ENCODE measurements at regions of chr18 and their contacts with region 1.

Region 1: DNA sequence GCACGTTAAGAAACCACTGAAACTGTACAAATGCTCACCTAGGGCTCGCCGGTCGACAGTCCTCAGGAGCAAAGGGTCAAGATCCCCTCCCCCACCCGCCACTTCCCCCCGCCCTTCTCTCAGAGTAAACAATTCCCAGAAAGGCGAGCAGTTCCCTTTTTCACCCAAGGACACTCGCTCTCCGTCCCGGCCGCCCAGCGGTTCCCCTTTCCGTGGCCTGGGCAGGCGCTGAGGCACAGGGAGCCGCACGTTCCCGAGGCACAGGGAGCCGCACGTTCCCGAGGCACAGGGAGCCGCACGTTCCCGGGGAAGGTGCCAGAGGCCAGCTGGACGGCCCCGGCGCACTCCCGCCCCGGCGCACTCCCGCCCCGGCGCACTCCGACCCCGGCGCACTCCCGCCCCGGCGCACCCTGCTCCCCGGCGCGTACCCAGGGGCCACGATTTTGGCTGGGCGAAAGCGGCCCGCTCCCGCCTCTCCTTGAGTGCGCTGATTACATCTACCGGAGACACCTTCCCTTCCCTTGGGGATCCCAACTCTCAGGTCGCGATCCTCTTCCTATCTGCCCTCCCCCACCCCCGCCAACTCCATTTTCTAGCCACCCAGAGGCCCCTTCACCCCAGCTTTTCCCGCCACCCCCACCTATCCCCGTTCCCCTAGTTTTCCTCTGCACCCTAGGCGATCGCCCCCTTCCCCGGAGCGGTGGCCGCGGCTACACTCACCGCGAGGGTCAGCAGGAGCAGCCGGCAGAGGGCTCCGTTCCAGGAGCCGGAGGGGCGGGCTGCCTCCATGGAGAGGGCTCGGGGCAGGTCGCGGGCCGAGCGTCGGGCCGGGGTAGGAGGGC is 817 bp downstream of the DSC2 start:
- H3K4me3 Mint-ChIP-seq: peak overlapping the region; percentile 94
- H3K27ac Mint-ChIP-seq: peak overlapping the region; percentile 98
- H3K4me1 Mint-ChIP-seq: peaks cover 45% of the 10 kb centered on the region
- H3K27me3 Mint-ChIP-seq: peaks cover 27% of the 10 kb centered on the region

Region 2: DNA sequence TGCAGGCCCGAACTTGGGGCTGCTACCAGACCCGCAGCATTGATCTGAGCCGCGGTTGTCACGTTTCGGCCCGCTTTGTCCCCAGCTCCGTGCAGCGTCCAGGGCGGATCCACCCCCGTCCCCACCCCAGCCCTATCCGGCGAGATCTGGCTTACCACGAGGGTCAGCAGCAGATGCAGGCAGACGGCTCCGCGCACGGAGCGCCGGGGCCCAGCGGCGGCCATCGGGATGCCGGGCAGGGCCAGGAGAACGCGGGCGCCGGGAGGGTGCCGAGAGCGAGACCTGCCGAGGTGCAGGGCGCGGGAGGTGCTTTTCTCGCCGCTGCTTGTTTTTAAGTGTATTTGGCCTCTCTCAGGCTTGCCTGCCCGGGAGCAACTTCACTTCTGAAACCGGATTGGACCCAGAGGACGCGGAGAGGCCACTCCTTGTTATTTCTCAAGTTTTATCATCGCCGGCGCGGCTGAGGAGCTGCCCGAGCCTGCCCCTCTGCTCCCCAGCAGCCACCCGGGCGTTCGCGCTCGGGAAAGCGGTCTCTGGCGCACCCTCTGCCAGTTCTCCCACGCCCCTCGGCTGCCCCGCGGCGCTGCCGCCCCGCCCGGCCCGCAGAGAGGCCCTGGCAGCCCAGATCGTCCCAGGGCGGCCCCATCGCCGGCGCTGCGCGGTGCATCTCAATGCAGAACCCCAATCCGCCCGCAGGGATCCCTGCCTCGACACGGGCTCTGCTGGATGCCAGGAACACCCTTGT is 58.8 kb before region 1 on chr18 and contains the start of gene DSC3:
- intact Hi-C with region 1: no loop called
- H3K4me3 Mint-ChIP-seq: peak within 1 kb of the TSS; percentile 46
- H3K27ac Mint-ChIP-seq: no peak within 1 kb of the TSS
- H3K4me1 Mint-ChIP-seq: peaks cover 17% of the 10 kb centered on the region
- H3K27me3 Mint-ChIP-seq: peaks cover 72% of the 10 kb centered on the region

Region 3: DNA sequence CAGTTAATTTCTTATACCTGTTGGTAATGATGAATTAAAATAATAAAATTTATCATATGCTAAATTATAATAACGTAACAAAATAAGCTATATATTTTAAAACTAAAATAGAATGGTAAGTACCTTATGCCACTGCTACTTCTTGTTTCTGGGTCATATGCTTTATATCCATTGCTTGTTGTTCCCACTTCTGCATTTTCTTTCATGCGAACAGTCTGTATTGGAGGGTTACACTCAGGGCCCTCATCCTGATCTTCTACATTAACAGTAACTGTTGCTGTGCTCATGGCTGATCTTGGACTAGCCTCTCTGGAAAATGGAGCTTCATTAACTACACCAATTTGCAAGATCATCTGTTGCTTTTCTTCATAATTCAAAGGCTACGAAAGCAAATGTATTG is 21.4 kb before region 1 on chr18:
- intact Hi-C with region 1: loop called (anchors 2 kb)
- H3K4me3 Mint-ChIP-seq: no peak overlapping the region
- H3K27ac Mint-ChIP-seq: peak overlapping the region; percentile 60
- H3K4me1 Mint-ChIP-seq: peaks cover 28% of the 10 kb centered on the region
- H3K27me3 Mint-ChIP-seq: peaks cover 2% of the 10 kb centered on the region

Region 4: GRCh38 chr18:31206787-31207381 is 105.5 kb after region 1 on chr18:
- intact Hi-C with region 1: loop called (anchors 2 kb)
- H3K4me3 Mint-ChIP-seq: peak overlapping the region; percentile 59
- H3K27ac Mint-ChIP-seq: peak overlapping the region; percentile 60
- H3K4me1 Mint-ChIP-seq: peaks cover 41% of the 10 kb centered on the region
- H3K27me3 Mint-ChIP-seq: no peaks in the 10 kb centered on the region